ENCODE measurements at regions of chr7 and their contacts with region 1.

Region 1: GRCh38 chr7:31830253-31830652 is 143.2 kb downstream of the PPP1R17 start:
- H3K4me3 Mint-ChIP-seq: no peak overlapping the region
- H3K27ac Mint-ChIP-seq: no peak overlapping the region
- H3K4me1 Mint-ChIP-seq: peaks cover 18% of the 10 kb centered on the region
- H3K27me3 Mint-ChIP-seq: peaks cover 2% of the 10 kb centered on the region

Region 2: DNA sequence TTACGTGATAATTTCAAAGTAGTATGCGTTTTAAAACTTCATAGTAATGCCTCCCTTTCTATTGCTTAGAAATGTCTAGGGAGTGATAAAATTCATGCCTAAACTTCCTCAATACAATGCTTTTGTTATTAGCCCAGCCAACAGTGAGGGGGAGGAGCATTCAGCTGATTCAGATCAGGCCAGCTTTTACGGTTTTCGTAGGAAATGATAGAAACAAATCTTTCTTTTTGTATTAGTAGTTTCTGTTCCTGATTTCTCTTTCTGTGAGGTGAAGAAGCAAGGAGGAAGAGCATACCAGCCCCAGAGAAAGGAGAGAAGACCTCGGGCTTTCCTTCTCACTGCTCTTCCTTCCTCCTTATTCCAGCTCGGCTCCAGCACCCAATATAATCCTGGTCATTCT is 351.5 kb before region 1 on chr7:
- intact Hi-C with region 1: no loop called
- H3K4me3 Mint-ChIP-seq: no peak overlapping the region
- H3K27ac Mint-ChIP-seq: peak overlapping the region; percentile 48
- H3K4me1 Mint-ChIP-seq: peaks cover 18% of the 10 kb centered on the region
- H3K27me3 Mint-ChIP-seq: peaks cover 13% of the 10 kb centered on the region

Region 3: DNA sequence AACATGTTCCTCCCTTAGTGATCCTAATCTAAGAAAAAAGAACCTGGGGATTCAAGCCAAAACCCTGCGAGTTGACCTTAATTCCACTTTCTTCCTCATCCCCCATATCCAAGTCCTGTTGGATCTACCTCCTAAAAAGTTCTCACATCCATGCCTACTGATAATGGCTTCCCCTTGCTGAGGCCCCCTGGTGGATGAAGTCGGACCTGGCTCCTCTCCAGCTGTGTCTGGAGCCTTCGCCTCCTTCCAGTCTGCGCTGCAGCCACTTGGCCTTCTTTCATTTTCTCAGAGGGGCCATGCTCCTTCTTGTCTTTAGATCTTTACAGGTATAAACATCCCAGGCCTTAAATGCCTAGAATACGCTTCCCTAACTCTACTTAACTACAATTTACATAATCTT is 231.9 kb after region 1 on chr7:
- intact Hi-C with region 1: loop called (anchors 5 kb)
- H3K4me3 Mint-ChIP-seq: no peak overlapping the region
- H3K27ac Mint-ChIP-seq: no peak overlapping the region
- H3K4me1 Mint-ChIP-seq: no peaks in the 10 kb centered on the region
- H3K27me3 Mint-ChIP-seq: no peaks in the 10 kb centered on the region

Region 4: GRCh38 chr7:32154797-32155196 is 324.5 kb after region 1 on chr7:
- intact Hi-C with region 1: no loop called
- H3K4me3 Mint-ChIP-seq: no peak overlapping the region
- H3K27ac Mint-ChIP-seq: no peak overlapping the region
- H3K4me1 Mint-ChIP-seq: no peaks in the 10 kb centered on the region
- H3K27me3 Mint-ChIP-seq: no peaks in the 10 kb centered on the region